Caco-2 (cell line): ENCODE measurements at regions of chr6 and their contacts with region 1.

Region 1: DNA sequence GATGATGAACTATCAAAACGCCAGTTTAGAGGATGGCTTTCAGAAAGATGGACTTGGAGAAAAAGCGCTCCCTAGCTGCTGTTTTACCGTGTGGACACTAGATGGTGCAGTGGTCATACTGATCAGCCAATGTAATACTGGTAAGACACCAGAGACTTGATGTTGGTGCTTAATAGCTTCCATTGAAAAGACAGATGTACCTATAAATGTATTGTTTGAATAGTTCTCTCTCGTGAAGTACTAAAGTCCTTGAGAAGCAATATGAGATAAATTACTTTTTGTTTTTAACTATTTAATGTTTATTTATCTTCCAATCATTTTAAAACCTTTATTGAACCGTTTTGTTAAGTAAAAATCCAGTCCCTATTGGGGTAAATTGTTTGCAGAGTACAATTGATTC is 63.9 kb upstream of the FUCA2 start:
- DNase-seq: peak; percentile 48 to 66
- H3K4me3 ChIP-seq: no peak overlapping the region
- H3K4me3 Mint-ChIP-seq: no peak overlapping the region
- H3K27ac Mint-ChIP-seq: no peak overlapping the region
- H3K4me1 ChIP-seq: no peaks in the 10 kb centered on the region
- H3K4me1 Mint-ChIP-seq: peaks cover 8% of the 10 kb centered on the region
- H3K27me3 ChIP-seq: no peaks in the 10 kb centered on the region
- H3K27me3 Mint-ChIP-seq: no peaks in the 10 kb centered on the region
- CTCF ChIP-seq: peak; percentile 77 to 84

Region 2: GRCh38 chr6:143536865-143537691 is 38.4 kb before region 1 on chr6:
- CTCF ChIA-PET with region 1: interaction called, 3 read pairs
- POLR2A ChIA-PET with region 1: no interaction called
- intact Hi-C with region 1: loop called (anchors 2 kb)
- DNase-seq: peak; percentile 78 to 84
- H3K4me3 ChIP-seq: peak overlapping the region; percentile 39
- H3K4me3 Mint-ChIP-seq: peak overlapping the region; percentile 82
- H3K27ac Mint-ChIP-seq: peak overlapping the region; percentile 84
- H3K4me1 ChIP-seq: peaks cover 61% of the 10 kb centered on the region
- H3K4me1 Mint-ChIP-seq: peaks cover 24% of the 10 kb centered on the region
- H3K27me3 ChIP-seq: no peaks in the 10 kb centered on the region
- H3K27me3 Mint-ChIP-seq: no peaks in the 10 kb centered on the region
- CTCF ChIP-seq: peak; percentile 19 to 63

Region 3: GRCh38 chr6:143664171-143664570 is 88.7 kb after region 1 on chr6:
- CTCF ChIA-PET with region 1: no interaction called
- POLR2A ChIA-PET with region 1: no interaction called
- intact Hi-C with region 1: no loop called
- DNase-seq: no peak
- H3K4me3 ChIP-seq: no peak overlapping the region
- H3K4me3 Mint-ChIP-seq: no peak overlapping the region
- H3K27ac Mint-ChIP-seq: no peak overlapping the region
- H3K4me1 ChIP-seq: no peaks in the 10 kb centered on the region
- H3K4me1 Mint-ChIP-seq: peaks cover 3% of the 10 kb centered on the region
- H3K27me3 ChIP-seq: no peaks in the 10 kb centered on the region
- H3K27me3 Mint-ChIP-seq: no peaks in the 10 kb centered on the region
- CTCF ChIP-seq: no peak

Region 4: GRCh38 chr6:143677891-143678791 is 102.7 kb after region 1 on chr6 and contains the start of gene PHACTR2:
- CTCF ChIA-PET with region 1: interaction called, 3 read pairs
- POLR2A ChIA-PET with region 1: no interaction called
- intact Hi-C with region 1: loop called (anchors 2 kb)
- DNase-seq: peak; percentile 85 to 86
- H3K4me3 ChIP-seq: peak within 1 kb of the TSS; percentile 88
- H3K4me3 Mint-ChIP-seq: peak within 1 kb of the TSS; percentile 82
- H3K27ac Mint-ChIP-seq: peak within 1 kb of the TSS; percentile 70
- H3K4me1 ChIP-seq: peaks cover 40% of the 10 kb centered on the region
- H3K4me1 Mint-ChIP-seq: peaks cover 18% of the 10 kb centered on the region
- H3K27me3 ChIP-seq: no peaks in the 10 kb centered on the region
- H3K27me3 Mint-ChIP-seq: no peaks in the 10 kb centered on the region
- CTCF ChIP-seq: no peak
- total RNA-seq, gene PHACTR2: 80.8 and 100 TPM in 2 replicates

Region 5: GRCh38 chr6:143700684-143701348 is 125.4 kb after region 1 on chr6:
- CTCF ChIA-PET with region 1: no interaction called
- POLR2A ChIA-PET with region 1: no interaction called
- intact Hi-C with region 1: no loop called
- DNase-seq: no peak
- H3K4me3 ChIP-seq: no peak overlapping the region
- H3K4me3 Mint-ChIP-seq: no peak overlapping the region
- H3K27ac Mint-ChIP-seq: no peak overlapping the region
- H3K4me1 ChIP-seq: peaks cover 22% of the 10 kb centered on the region
- H3K4me1 Mint-ChIP-seq: peaks cover 31% of the 10 kb centered on the region
- H3K27me3 ChIP-seq: no peaks in the 10 kb centered on the region
- H3K27me3 Mint-ChIP-seq: no peaks in the 10 kb centered on the region
- CTCF ChIP-seq: no peak

Region 6: GRCh38 chr6:143842902-143843676 is 267.6 kb after region 1 on chr6 and contains the start of gene LTV1:
- CTCF ChIA-PET with region 1: interaction called, 17 read pairs
- POLR2A ChIA-PET with region 1: interaction called, 7 read pairs
- intact Hi-C with region 1: loop called (anchors 2 kb)
- DNase-seq: peak; percentile 96
- H3K4me3 ChIP-seq: peak within 1 kb of the TSS; percentile 78
- H3K4me3 Mint-ChIP-seq: peak within 1 kb of the TSS; percentile 92
- H3K27ac Mint-ChIP-seq: peak within 1 kb of the TSS; percentile 94
- H3K4me1 ChIP-seq: peaks cover 7% of the 10 kb centered on the region; the same call in 1 of the 2 replicates
- H3K4me1 Mint-ChIP-seq: peaks cover 7% of the 10 kb centered on the region
- H3K27me3 ChIP-seq: no peaks in the 10 kb centered on the region
- H3K27me3 Mint-ChIP-seq: no peaks in the 10 kb centered on the region
- CTCF ChIP-seq: no peak
- total RNA-seq, gene LTV1: 36.2 and 38.1 TPM in 2 replicates

Region 7: DNA sequence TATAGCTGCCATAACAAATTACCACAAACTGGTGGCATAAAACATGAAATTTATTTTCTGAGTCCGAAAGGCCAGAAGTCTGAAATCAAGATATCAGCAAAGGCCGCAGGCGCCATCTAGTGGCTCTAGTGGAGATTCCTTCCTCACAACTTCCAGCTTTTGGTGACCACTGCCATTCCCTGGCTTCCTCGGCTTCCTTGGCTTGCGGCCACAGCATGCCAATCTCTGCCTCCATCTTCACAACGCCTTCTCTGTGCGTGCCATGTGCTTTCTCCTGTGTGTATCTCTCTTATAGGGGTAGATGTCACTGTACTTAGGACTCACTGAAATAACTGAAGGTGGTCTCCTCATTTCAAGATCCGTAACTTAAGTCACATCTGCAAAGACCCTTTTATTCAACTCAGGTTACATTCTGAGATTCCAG is 438.1 kb after region 1 on chr6:
- CTCF ChIA-PET with region 1: interaction called, 16 read pairs
- POLR2A ChIA-PET with region 1: no interaction called
- intact Hi-C with region 1: loop called (anchors 1 kb)
- DNase-seq: peak; percentile 63 to 69
- H3K4me3 ChIP-seq: no peak overlapping the region
- H3K4me3 Mint-ChIP-seq: no peak overlapping the region
- H3K27ac Mint-ChIP-seq: no peak overlapping the region
- H3K4me1 ChIP-seq: no peaks in the 10 kb centered on the region
- H3K4me1 Mint-ChIP-seq: no peaks in the 10 kb centered on the region
- H3K27me3 ChIP-seq: no peaks in the 10 kb centered on the region
- H3K27me3 Mint-ChIP-seq: peaks cover 7% of the 10 kb centered on the region
- CTCF ChIP-seq: peak; percentile 77 to 87